Panc1 (cell line): ENCODE measurements at regions of chr3 and their contacts with region 1.

Region 1: DNA sequence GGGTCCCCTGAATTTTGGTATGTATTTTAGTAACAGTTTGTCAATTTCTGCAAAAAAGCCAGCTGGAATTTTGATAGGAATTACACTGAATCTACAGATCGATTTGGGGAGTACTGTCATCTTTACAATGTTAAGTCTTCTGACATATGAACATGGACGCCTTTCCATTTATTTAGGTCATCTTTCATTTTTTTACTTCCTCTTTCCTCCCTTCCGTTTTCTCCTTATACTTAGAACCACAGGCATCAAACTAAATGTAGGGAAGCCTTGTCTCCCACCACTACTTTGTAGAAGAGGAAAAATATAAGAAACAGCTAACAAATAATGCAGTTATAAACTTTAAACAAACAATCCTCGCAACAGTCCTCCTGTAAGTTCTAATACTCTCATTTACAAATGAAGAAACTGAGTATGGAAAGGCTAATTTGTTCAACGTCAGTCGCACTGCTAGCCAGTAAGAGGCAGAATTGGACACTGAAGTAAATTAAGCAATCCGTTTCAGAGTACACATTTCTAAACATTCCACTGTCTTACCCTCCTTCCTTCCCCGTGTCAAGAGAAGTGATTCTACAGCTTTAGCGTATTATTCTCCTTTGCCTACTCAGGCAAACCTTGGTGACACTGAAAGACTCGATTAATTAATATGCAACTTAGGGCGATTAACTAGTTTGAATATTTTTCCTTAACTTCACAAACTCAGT is 25.6 kb downstream of the RHOA start:
- DNase-seq: no peak
- ATAC-seq: no peak
- H3K4me3 ChIP-seq: no peak overlapping the region
- H3K27ac ChIP-seq: no peak overlapping the region
- H3K4me1 ChIP-seq: no peaks in the 10 kb centered on the region
- H3K27me3 ChIP-seq: no peaks in the 10 kb centered on the region
- CTCF ChIP-seq: no peak

Region 2: GRCh38 chr3:48678056-48678455 is 708.1 kb before region 1 on chr3:
- CTCF ChIA-PET with region 1: no interaction called
- POLR2A ChIA-PET with region 1: no interaction called
- in situ Hi-C with region 1: no loop called
- intact Hi-C with region 1: no loop called
- DNase-seq: no peak
- ATAC-seq: no peak
- H3K4me3 ChIP-seq: no peak overlapping the region
- H3K27ac ChIP-seq: no peak overlapping the region
- H3K4me1 ChIP-seq: no peaks in the 10 kb centered on the region
- H3K27me3 ChIP-seq: no peaks in the 10 kb centered on the region
- CTCF ChIP-seq: no peak

Region 3: GRCh38 chr3:49030321-49030720 is 355.9 kb before region 1 on chr3:
- CTCF ChIA-PET with region 1: no interaction called
- POLR2A ChIA-PET with region 1: interaction called, 12 read pairs
- in situ Hi-C with region 1: no loop called
- intact Hi-C with region 1: no loop called
- DNase-seq: no peak
- ATAC-seq: no peak
- H3K4me3 ChIP-seq: no peak overlapping the region
- H3K27ac ChIP-seq: no peak overlapping the region
- H3K4me1 ChIP-seq: peaks cover 20% of the 10 kb centered on the region
- H3K27me3 ChIP-seq: no peaks in the 10 kb centered on the region
- CTCF ChIP-seq: no peak